ENCODE measurements at regions of chr16 and their contacts with region 1.

Region 1: GRCh38 chr16:52191531-52192134 is 355.3 kb downstream of the TOX3 start:
- DNase-seq: peak; percentile 55 to 96 (median 80)

Region 2: DNA sequence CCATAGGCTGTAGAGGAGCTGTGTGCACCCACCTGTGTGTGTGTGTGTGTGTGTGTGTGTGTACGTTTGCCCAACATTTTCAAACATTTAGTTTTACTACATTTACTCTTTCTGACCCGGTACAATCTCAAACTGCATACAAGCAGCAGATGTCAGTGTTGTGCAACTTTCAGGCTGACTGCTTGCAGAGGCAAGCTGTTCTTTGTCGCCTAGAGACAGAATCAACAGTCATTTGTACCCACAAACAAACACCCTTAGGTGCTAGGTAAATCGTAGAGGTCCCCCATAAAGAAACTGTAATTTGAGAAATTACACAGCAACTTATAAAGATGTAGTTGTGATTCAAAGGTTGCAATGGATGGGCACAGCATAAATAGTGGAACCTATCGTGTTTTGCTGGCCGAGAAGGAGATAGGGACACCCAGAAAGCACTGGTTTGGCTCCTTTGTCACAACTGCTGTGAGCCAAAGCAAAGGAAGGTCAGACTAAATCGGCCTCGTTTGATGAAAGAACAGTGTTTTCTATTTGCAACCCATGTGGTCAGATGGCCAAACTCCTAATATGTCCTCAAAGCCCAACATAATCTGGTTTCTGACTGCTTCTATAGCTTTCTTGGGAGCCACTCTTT is 123.1 kb before region 1 on chr16:
- intact Hi-C with region 1: loop called (anchors 5 kb)
- DNase-seq: peak in 7 of 10 donors; percentile 10 to 86 (median 51)

Region 3: GRCh38 chr16:52422307-52422706 is 230.7 kb after region 1 on chr16:
- intact Hi-C with region 1: loop called (anchors 5 kb)
- DNase-seq: no peak

Region 4: DNA sequence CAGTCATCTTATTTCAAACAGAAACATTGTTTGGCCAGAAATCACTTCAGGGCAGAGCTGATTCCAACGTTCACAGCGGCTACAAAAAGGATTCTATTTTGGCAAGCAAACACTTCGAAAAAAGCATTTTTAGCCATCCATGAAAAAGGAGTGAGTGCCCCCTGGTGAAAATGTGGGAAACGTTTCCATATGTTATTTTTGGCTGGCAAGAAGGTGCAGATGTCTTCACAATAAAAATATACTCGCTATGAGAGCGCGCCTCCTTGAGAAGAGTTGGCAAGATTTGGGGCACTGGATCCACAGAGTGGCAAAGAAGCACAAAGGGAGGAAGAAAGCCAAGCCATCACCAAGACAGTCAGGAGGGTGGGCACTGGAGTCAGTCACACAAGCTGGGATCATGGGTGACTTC is 670.0 kb after region 1 on chr16:
- intact Hi-C with region 1: loop called (anchors 5 kb)
- DNase-seq: peak in 3 of 10 donors; percentile 5 to 22 (median 9)

Region 5: DNA sequence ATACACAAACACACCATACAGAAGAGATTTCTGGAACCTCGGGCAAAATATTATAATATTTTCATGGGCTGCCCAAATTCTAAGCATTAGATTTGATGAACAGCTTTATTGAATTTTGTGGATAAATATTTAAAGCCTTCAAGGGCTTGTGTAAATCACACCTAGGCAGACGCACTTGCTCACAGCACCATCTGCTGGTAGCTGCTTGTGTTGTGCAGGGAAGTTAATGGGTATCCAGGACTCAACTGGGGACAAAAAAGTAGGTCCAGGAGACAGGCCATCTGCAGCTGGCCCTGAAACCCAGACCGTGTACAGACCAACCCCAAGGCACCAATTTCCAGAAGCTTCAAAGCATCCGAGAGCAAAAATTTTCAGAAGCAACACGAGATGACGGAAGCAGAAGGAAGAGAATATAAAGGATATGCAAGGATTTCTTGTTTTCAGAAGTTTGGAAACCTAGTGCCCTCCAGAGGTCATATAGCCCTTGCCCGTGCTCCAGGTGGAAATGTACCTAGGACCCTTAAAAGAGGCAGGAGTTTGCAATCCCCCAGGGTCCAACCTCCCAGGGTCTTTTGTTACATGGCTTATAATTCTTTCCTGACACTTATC is 721.0 kb after region 1 on chr16:
- intact Hi-C with region 1: loop called (anchors 1 kb)
- DNase-seq: peak; percentile 48 to 96 (median 78)

Region 6: DNA sequence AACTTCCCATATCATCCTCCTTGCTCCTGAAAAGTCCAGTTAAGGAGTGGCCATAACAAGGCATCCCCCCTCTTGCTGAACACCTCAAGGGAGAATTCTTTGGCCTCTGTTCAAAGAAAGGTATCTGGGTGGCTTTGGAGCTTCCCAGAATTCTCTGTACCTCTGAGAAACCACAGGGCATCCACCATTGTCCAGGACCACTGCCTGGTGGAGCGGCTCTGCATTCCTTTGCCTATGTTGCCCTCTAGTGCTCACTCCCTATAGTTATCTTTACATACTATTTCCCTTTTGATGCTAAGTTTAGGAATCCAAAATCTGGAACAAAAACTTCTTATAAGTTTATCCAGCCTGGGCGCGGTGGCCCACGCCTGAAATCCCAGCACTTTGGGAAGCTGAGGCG is 830.7 kb after region 1 on chr16:
- intact Hi-C with region 1: loop called (anchors 5 kb)
- DNase-seq: peak in 8 of 10 donors; percentile 20 to 87 (median 44)

Measured in posterior cingulate gyrus (tissue), 11 donors.